ENCODE measurements at regions of chr16 and their contacts with region 1.

Region 1: DNA sequence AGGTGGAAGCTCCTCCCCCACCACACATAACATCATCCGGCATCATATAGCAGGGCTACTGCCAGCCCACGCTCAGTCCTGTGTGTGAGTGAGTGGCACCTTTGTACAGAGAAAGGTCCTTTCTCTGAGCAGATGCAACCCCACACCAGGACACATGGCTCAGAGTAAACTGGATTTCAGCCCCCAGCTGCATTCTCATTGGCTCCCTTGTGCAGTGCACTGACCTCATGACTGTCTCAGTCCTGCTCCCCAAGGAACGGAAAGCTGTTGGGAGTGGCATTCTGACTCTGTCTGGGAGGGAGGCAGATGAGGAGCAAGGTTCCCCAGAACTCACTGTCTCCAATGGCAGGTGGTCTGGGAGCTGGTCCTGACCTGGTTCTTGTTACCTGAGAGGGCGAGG is 244.1 kb downstream of the PHKB start:
- DNase-seq: no peak
- H3K4me3 ChIP-seq: no peak overlapping the region
- H3K27ac ChIP-seq: no peak overlapping the region
- H3K4me1 ChIP-seq: no peaks in the 10 kb centered on the region
- H3K27me3 ChIP-seq: no peaks in the 10 kb centered on the region
- CTCF ChIP-seq: no peak
- POLR2A ChIP-seq: no peak

Region 2: GRCh38 chr16:47644166-47644565 is 61.1 kb before region 1 on chr16:
- CTCF ChIA-PET with region 1: no interaction called
- POLR2A ChIA-PET with region 1: no interaction called
- dilution Hi-C with region 1: no loop called
- intact Hi-C with region 1: loop called (anchors 10 kb)
- DNase-seq: peak; percentile 80
- H3K4me3 ChIP-seq: no peak overlapping the region
- H3K27ac ChIP-seq: no peak overlapping the region
- H3K4me1 ChIP-seq: peaks cover 13% of the 10 kb centered on the region
- H3K27me3 ChIP-seq: no peaks in the 10 kb centered on the region
- CTCF ChIP-seq: no peak
- POLR2A ChIP-seq: no peak

Measured in endothelial cell of umbilical vein (primary cell).